Right cardiac atrium (tissue), 5 donors: ENCODE measurements at regions of chr9 and their contacts with region 1.

Region 1: GRCh38 chr9:98263482-98264357 is 8.3 kb upstream of the TBC1D2 start:
- DNase-seq: peak; percentile 78 to 90 (median 88)
- ATAC-seq: peak; percentile 93 to 94
- H3K4me3 ChIP-seq: no peak overlapping the region
- H3K27ac ChIP-seq: no peak overlapping the region
- H3K4me1 ChIP-seq: no peaks in the 10 kb centered on the region
- H3K27me3 ChIP-seq: no peaks in the 10 kb centered on the region

Region 2: DNA sequence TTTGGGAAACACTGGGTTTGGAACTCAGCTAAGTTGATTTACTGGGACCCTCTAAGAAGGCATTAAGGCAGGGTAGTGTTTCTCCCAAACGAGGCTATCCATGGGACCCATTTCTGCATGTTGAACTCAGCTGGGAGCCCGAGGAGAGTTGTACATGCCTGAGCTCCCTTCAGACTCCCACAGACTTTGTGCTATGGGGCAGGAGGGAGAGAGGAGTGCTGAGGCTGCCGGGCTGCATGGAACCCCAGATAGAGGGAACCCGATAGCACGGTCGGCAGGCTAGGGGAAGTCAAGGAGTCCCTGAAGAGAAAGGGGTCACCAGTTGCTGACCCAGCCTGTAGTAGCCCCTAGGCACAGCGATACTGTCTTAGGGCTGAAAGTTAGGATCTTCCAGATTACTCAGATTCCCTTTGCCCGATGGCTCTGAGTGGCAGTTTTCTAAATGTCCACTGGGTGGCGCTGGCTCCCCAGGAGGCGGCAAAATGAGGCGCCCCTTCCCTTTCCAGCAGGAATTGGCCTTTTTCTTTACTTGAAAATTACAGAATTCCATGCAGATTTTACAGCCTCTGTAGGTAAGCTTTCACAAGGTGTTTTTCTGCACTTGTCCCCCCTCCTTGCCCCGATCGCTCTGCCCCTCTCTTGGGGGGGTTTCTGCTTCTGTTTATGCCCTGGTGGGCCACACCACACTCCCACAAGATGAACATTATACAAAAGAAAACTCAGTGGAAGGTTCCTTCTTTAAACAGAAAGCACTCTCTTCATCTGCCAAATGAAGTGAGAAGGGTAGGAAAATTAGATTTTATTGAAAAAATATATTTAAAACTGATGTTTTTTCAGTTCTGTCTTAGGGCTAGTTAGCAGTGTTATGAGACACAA is 189.4 kb before region 1 on chr9:
- intact Hi-C with region 1: loop called in 3 of 4 experiments (anchors 5 to 10 kb)
- DNase-seq: peak in 2 of 3 donors; percentile 74 to 75
- ATAC-seq: peak; percentile 20 to 58
- H3K4me3 ChIP-seq: no peak overlapping the region
- H3K27ac ChIP-seq: no peak overlapping the region
- H3K4me1 ChIP-seq: peaks cover 2% of the 10 kb centered on the region
- H3K27me3 ChIP-seq: no peaks in the 10 kb centered on the region

Region 3: GRCh38 chr9:98201102-98201501 is 62.6 kb before region 1 on chr9:
- intact Hi-C with region 1: loop called in 3 of 4 experiments (anchors 5 kb)
- DNase-seq: no peak
- ATAC-seq: no peak
- H3K4me3 ChIP-seq: no peak overlapping the region
- H3K27ac ChIP-seq: no peak overlapping the region
- H3K4me1 ChIP-seq: no peaks in the 10 kb centered on the region
- H3K27me3 ChIP-seq: no peaks in the 10 kb centered on the region

Region 4: DNA sequence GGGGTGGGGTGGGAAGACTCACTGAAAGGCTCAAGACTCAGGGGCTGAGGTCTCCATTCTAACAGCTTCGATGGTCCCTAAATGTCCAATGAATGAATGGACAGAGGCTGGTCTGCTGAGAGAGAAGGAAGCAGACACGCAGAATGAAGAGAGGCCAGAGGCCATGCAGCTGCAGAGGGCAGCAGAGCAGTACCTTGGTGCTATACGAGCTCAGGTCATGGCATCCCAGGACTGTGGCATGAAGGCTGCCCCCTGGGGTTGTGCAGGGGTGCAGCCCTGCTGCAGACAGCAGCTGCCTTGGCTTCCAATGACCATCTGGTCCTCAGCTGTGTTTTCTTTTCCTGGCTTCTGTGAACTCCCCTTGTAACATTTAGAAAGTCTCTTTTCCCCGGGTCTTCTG is 56.1 kb before region 1 on chr9:
- intact Hi-C with region 1: loop called in 3 of 4 experiments (anchors 5 kb)
- DNase-seq: no peak
- ATAC-seq: no peak
- H3K4me3 ChIP-seq: no peak overlapping the region
- H3K27ac ChIP-seq: no peak overlapping the region
- H3K4me1 ChIP-seq: no peaks in the 10 kb centered on the region
- H3K27me3 ChIP-seq: no peaks in the 10 kb centered on the region